Activated T-helper 2 cell treated with anti-CD3 and anti-CD28 coated beads, Interferon-gamma antibody, Interleukin-2, Interleukin-4, amounts not matched to agents 10 μg/mL and 5 μg/mL and 100 μg/mL, durations not matched to agents 14 hours and 24 hours and 36 hours (primary cell): ENCODE measurements at regions of chr1 and their contacts with region 1.

Region 1: DNA sequence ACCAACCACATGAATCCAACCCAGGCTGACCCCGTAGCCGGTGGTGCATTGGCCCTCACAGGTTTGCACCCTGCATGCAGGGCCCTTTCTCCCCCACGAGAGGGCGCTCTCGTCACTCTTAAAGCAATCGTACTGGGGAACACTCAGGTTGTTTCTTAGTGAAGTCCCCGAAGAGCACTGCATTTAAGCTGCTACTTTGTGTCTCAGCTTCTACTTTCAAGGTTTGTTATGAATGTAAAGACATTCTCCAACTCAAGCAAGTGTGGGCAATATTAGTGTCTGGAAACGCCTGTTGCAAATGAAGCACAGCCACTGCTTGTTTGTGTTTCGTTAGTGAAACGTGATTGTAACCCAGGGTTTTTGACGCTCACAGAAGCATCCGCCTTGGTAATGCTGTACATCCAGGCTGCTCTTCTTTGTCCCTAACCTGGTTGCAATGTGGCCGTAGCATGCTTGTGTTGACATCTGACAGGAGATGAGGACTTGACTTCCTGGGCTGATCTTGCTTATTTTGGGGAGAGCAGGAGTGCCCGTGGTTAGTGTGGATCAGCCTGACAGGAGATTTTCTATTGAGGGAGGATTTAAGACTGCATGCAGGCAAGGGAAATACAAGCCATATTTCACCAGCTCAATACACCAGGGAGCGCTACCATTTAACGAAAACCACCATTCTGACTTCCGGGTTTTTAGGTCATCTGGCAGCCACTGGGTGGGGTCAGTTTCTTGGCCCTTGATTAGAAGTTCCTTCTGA is 79.8 kb downstream of the ST6GALNAC3 start:
- DNase-seq: peak; percentile 70
- H3K4me3 Mint-ChIP-seq: peak overlapping the region; percentile 79
- H3K27ac Mint-ChIP-seq: peak overlapping the region; percentile 91
- H3K4me1 Mint-ChIP-seq: peaks cover 11% of the 10 kb centered on the region
- H3K27me3 Mint-ChIP-seq: peaks cover 7% of the 10 kb centered on the region

Region 2: DNA sequence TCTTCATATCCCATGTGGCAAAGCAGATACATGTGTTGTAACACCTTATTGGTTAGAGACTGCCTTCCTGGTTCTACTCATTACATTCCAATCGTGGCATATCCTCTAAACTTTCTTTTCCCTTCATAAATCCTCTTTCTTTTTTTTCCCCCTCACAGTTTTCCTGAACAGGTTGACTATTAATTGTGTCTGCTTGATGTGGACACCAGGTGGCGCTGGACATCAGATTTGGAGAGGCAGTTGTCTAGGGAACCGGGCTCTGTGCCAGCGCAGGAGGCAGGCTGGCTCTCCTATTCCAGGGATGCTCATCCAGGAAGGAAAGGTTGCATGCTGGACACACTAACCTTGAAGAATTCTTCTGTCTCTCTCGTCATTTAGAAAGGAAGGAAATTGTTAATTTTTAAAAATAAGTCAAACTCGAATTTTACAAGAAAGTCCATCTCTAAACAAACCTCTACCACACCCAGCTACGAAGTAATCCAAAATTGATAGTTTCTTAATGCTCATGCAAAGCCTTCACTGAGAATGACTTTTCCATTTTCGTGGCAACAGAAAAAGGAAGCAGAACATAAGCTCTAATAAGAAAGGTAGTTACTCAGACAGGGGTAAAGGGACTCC is 162.8 kb before region 1 on chr1:
- intact Hi-C with region 1: loop called (anchors 5 kb)
- DNase-seq: peak; percentile 40
- H3K4me3 Mint-ChIP-seq: no peak overlapping the region
- H3K27ac Mint-ChIP-seq: no peak overlapping the region
- H3K4me1 Mint-ChIP-seq: no peaks in the 10 kb centered on the region
- H3K27me3 Mint-ChIP-seq: peaks cover 15% of the 10 kb centered on the region

Region 3: GRCh38 chr1:76294482-76295194 is 140.3 kb after region 1 on chr1:
- intact Hi-C with region 1: loop called (anchors 5 kb)
- DNase-seq: no peak
- H3K4me3 Mint-ChIP-seq: peak overlapping the region; percentile 11
- H3K27ac Mint-ChIP-seq: peak overlapping the region; percentile 64
- H3K4me1 Mint-ChIP-seq: peaks cover 48% of the 10 kb centered on the region
- H3K27me3 Mint-ChIP-seq: no peaks in the 10 kb centered on the region

Region 4: DNA sequence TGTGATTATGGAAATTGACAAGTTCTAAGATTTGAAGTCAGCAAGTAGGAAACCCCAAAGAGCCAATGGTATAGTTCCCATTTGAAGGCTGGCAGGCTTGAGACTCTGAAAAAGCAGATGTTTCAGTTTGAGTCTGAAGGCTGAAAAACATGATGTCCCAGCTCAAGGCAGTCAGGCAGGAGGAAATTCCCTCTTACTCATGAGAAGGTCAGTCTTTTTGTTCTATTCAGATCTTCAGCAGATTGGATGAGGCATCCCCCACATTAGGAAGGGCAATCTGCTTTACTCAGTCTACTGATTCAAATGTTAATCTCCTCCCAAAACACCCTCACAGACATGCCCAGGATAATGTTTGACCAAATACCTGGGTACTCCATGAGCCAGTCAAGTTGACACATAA is 340.4 kb after region 1 on chr1:
- intact Hi-C with region 1: loop called (anchors 5 kb)
- DNase-seq: no peak
- H3K4me3 Mint-ChIP-seq: peak overlapping the region; percentile 35
- H3K27ac Mint-ChIP-seq: peak overlapping the region; percentile 70
- H3K4me1 Mint-ChIP-seq: peaks cover 21% of the 10 kb centered on the region
- H3K27me3 Mint-ChIP-seq: peaks cover 3% of the 10 kb centered on the region

Region 5: GRCh38 chr1:76868154-76868882 is 713.9 kb after region 1 on chr1:
- intact Hi-C with region 1: loop called (anchors 10 kb)
- DNase-seq: no peak
- H3K4me3 Mint-ChIP-seq: peak overlapping the region; percentile 60
- H3K27ac Mint-ChIP-seq: no peak overlapping the region
- H3K4me1 Mint-ChIP-seq: no peaks in the 10 kb centered on the region
- H3K27me3 Mint-ChIP-seq: peaks cover 66% of the 10 kb centered on the region

Region 6: DNA sequence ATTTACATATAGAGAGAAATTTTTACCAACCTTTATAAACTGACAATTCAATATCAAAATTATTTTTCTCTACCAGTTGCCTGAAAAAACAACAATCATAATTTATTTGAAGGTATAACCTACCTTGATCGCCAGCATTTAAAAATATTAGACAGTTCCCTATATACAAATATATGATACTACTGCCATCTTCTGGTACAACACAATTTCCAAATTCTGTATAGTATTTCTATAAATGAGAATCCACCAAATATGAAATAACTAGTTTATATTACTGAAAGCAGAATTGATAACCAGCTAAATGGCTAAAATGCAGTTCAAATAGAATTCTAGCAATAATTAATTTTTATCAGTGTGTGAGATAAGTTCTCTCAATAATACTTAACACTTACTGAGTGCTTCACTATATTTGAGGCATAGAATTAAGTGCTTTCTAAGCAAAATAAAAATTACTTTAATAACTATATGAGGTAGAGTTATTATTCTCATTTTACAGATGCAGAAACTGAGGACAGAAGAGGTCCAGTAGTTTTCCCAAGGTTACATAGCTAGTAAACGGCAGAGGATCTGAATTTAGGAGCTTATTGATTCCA is 989.2 kb after region 1 on chr1:
- intact Hi-C with region 1: loop called (anchors 1 kb)
- DNase-seq: no peak
- H3K4me3 Mint-ChIP-seq: no peak overlapping the region
- H3K27ac Mint-ChIP-seq: no peak overlapping the region
- H3K4me1 Mint-ChIP-seq: peaks cover 2% of the 10 kb centered on the region
- H3K27me3 Mint-ChIP-seq: no peaks in the 10 kb centered on the region